Caco-2 (cell line): ENCODE measurements at regions of chr7 and their contacts with region 1.

Region 1: DNA sequence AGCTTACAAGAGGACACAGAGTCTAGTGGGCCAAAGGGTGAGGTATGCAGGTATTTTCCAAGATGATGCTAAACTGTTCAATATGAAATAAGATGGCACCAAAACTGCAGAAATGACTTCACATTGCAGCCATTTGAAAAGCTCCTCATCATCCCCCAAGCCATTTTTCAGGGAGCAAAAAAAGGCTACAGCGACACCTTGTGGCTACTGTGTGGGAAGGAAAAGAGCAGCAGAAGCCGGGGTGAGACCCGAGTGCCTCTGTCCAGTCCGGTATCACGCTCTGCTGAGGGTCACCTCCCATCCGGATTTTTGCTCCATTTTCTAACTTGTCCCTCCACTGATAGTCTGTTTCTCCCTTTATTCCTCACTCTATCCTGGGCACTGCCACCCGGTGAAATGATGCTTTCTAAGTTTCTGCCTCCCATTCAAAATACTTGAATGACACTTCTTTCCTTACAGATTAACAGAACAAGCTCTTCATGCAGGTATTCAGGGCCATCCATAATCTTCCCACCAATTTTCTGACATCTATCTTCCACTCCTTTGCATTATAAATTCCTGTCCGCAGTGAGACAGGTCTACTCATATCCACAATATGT is 220.2 kb downstream of the DGKI start:
- DNase-seq: peak; percentile 45 to 52
- H3K4me3 ChIP-seq: no peak overlapping the region
- H3K4me3 Mint-ChIP-seq: no peak overlapping the region
- H3K27ac Mint-ChIP-seq: no peak overlapping the region
- H3K4me1 ChIP-seq: no peaks in the 10 kb centered on the region
- H3K4me1 Mint-ChIP-seq: no peaks in the 10 kb centered on the region
- H3K27me3 ChIP-seq: no peaks in the 10 kb centered on the region
- H3K27me3 Mint-ChIP-seq: peaks cover 9% of the 10 kb centered on the region
- CTCF ChIP-seq: peak; percentile 67 to 71

Region 2: DNA sequence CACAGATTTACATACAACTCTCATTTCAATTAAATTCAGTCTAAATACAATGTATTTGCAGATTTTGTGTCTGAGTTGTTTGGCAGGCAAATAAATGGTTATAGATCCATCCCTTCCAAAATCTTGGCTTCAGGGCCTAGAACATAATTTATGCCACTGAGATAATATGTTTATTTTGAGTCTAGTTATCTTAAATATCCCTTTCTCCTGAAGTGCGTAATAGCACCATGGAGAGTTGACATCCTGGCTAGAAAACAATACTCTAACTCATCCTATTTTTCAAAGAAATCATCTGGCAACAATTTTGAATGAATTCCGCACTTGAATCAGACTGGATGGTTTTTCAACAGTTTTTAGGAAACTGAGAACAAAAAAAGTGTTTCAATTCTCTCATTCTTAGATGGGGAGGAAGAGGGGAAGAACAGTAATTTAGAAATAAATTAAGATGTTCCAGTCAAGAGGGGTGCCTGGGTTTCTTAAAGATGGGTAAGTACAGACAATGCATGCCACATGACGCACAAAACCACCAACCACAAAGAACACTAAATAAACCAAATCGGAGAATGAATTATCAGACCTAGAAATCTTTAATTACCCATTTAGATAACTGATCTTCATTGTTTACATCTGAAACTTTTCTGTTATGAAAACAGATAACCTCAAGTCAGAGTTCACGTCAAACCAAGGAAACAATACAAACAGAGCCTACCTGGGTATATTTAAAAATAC is 54.3 kb before region 1 on chr7:
- CTCF ChIA-PET with region 1: no interaction called
- POLR2A ChIA-PET with region 1: no interaction called
- intact Hi-C with region 1: no loop called
- DNase-seq: no peak
- H3K4me3 ChIP-seq: no peak overlapping the region
- H3K4me3 Mint-ChIP-seq: no peak overlapping the region
- H3K27ac Mint-ChIP-seq: no peak overlapping the region
- H3K4me1 ChIP-seq: no peaks in the 10 kb centered on the region
- H3K4me1 Mint-ChIP-seq: no peaks in the 10 kb centered on the region
- H3K27me3 ChIP-seq: no peaks in the 10 kb centered on the region
- H3K27me3 Mint-ChIP-seq: peaks cover 7% of the 10 kb centered on the region
- CTCF ChIP-seq: no peak

Region 3: DNA sequence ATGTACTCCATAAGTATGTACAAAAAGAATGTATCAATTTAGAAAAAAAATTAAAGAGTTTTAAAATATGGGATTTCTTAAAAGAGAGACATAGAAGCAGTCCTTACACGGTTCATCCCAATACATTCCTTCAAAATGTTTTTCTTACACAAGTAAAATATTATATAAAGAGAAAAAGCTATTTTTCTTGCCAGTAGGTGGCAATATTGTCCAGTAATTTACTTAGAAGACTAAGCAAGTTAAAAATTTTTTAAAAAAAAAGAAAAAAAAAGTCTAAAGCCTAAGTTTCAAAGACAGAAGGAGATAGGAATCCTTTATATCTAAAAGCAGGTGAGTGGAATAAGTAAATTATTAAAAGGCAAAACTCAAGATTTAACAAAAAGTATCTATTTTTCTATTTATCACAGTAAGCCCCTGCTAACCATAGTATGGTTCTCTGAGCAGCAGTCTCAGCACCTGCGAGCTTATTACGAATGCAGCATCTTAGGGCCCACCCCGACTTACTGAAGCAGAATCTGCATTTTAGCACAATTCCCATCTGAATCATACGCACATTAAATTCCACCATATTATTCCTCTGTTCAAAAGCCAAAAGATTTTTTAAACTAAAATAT is 20.4 kb before region 1 on chr7:
- CTCF ChIA-PET with region 1: interaction called, 10 read pairs
- POLR2A ChIA-PET with region 1: no interaction called
- intact Hi-C with region 1: loop called (anchors 1 kb)
- DNase-seq: peak in 1 of 2 experiments; percentile 23
- H3K4me3 ChIP-seq: no peak overlapping the region
- H3K4me3 Mint-ChIP-seq: no peak overlapping the region
- H3K27ac Mint-ChIP-seq: no peak overlapping the region
- H3K4me1 ChIP-seq: no peaks in the 10 kb centered on the region
- H3K4me1 Mint-ChIP-seq: no peaks in the 10 kb centered on the region
- H3K27me3 ChIP-seq: no peaks in the 10 kb centered on the region
- H3K27me3 Mint-ChIP-seq: peaks cover 16% of the 10 kb centered on the region
- CTCF ChIP-seq: peak; percentile 29 to 51

Region 4: GRCh38 chr7:137694405-137694804 is 67.8 kb after region 1 on chr7:
- CTCF ChIA-PET with region 1: no interaction called
- POLR2A ChIA-PET with region 1: no interaction called
- intact Hi-C with region 1: no loop called
- DNase-seq: no peak
- H3K4me3 ChIP-seq: no peak overlapping the region
- H3K4me3 Mint-ChIP-seq: no peak overlapping the region
- H3K27ac Mint-ChIP-seq: no peak overlapping the region
- H3K4me1 ChIP-seq: no peaks in the 10 kb centered on the region
- H3K4me1 Mint-ChIP-seq: no peaks in the 10 kb centered on the region
- H3K27me3 ChIP-seq: no peaks in the 10 kb centered on the region
- H3K27me3 Mint-ChIP-seq: peaks cover 19% of the 10 kb centered on the region
- CTCF ChIP-seq: no peak